IMR-90 (cell line): ENCODE measurements at regions of chr15 and their contacts with region 1.

Region 1: DNA sequence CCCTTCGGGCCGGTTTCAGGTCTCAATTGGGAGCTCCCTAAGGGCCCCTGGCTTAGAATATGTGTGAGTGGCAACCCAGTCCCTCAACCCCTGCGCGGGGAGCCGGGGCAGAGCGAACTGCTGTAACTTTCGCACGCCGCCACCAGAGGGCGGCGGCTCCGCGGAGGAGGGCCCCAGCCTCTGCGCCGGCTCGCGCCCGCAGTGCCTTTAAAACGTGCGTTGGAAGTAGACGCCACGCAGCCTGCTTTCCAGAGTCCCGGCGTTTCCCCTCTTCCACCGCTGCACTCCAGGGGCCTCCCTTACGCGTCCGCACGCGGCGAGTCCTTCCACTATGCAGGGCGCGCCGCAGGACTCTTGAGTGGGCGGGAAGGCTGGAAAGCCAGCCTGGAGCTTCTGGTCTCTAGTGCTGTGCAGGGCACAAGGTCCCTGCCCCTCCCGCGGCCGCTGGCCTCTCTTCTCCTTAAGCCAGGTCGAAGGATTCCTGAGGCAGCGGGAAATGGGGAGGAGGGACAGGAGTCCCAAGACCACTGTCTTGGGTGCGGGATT is 23.7 kb upstream of the RNU6-1 start:
- DNase-seq: peak; percentile 71
- ATAC-seq: peak; percentile 97
- H3K4me3 ChIP-seq: peak overlapping the region; percentile 47
- H3K27ac ChIP-seq: no peak overlapping the region; the same call in 1 of the 2 replicates
- H3K4me1 ChIP-seq: peaks cover 4% of the 10 kb centered on the region; the same call in 1 of the 2 replicates
- H3K27me3 ChIP-seq: peaks cover 8% of the 10 kb centered on the region; the same call in 1 of the 2 replicates
- CTCF ChIP-seq: peak; percentile 91
- POLR2A ChIP-seq: peak; percentile 36; the same call in 1 of the 2 replicates
- RAD21 ChIP-seq: peak; percentile 98

Region 2: GRCh38 chr15:68053701-68054627 is 190.4 kb after region 1 on chr15 and contains the start of gene PIAS1:
- CTCF ChIA-PET with region 1: no interaction called
- POLR2A ChIA-PET with region 1: no interaction called
- dilution Hi-C with region 1: no loop called
- in situ Hi-C with region 1: no loop called
- intact Hi-C with region 1: loop called (anchors 1 kb)
- DNase-seq: peak; percentile 83
- ATAC-seq: peak; percentile 98
- H3K4me3 ChIP-seq: peak within 1 kb of the TSS; percentile 88
- H3K27ac ChIP-seq: peak within 1 kb of the TSS; percentile 57
- H3K4me1 ChIP-seq: no peaks in the 10 kb centered on the region; the same call in 1 of the 2 replicates
- H3K27me3 ChIP-seq: no peaks in the 10 kb centered on the region; the same call in 1 of the 2 replicates
- CTCF ChIP-seq: no peak
- POLR2A ChIP-seq: peak; percentile 74
- RAD21 ChIP-seq: no peak
- total RNA-seq, gene PIAS1: 41.1 and 63.6 TPM in 2 replicates

Region 3: DNA sequence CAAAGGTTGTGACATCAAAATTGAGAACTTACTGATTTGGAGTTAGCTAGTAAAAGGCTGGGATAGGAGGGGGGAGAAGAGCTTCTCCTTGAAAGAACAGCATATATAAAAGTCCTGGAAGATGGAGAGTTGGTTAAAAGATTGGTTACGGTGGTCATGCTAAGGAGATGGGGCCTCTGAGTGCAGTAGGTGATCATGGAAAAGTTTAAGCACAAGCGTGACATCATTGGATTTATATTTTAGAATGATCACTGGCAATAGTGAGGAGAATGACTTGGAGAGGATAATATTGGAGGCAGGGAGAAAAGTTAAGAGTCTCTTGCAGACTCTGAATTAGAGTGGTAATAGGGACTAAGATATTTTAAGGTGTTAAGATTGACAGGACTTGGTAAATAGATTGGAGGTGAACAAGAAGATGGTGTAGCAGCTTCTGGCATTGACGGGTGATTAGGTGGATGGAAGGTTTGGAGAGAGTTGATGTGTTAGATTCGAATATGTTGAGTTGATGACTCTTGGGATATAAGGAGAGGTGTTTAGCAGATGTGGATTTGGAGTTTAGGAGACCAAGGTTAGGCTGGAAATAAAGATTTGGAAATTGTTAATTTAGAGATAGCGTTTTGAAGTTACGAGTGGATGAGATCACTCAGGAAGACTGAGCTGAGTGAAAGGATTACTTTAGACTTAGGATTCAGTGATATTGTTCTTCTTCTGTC is 210.2 kb after region 1 on chr15:
- CTCF ChIA-PET with region 1: no interaction called
- POLR2A ChIA-PET with region 1: interaction called, 16 read pairs
- dilution Hi-C with region 1: no loop called
- in situ Hi-C with region 1: no loop called
- intact Hi-C with region 1: no loop called
- DNase-seq: no peak
- ATAC-seq: no peak
- H3K4me3 ChIP-seq: no peak overlapping the region
- H3K27ac ChIP-seq: no peak overlapping the region
- H3K4me1 ChIP-seq: no peaks in the 10 kb centered on the region
- H3K27me3 ChIP-seq: no peaks in the 10 kb centered on the region
- CTCF ChIP-seq: no peak
- POLR2A ChIP-seq: no peak
- RAD21 ChIP-seq: no peak

Region 4: DNA sequence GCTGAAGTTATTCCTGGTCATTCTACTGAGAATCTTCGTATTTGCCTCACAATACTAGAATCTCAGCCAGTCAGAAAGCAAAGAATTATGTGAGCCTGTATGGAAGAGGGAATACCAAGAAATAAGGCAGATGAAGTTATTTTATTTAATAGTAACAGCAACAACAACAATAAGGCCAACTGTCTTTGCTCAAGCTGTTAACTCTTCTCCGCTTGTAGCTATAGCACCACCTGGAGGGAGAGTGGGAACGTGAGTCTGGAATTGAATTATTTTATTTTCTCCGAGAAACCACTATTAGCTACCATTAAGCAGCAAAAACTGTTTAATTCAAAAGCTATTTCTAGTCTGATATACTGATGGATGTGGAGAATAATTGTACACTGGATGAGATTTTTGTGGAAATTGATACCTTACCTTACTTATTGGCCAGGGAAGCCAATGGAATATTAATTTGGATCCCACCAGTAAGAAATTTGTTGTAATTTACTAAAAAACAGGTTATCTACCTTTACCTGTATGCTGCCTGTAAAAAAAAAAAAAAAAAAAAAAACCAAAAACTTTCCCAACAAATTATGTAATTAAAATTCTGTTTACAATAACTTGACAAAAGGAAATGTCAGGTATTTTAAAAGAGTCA is 291.5 kb after region 1 on chr15:
- CTCF ChIA-PET with region 1: interaction called, 4 read pairs
- POLR2A ChIA-PET with region 1: no interaction called
- dilution Hi-C with region 1: no loop called
- in situ Hi-C with region 1: loop called (anchors 10 kb)
- intact Hi-C with region 1: loop called (anchors 1 kb)
- DNase-seq: peak; percentile 70
- ATAC-seq: peak; percentile 54
- H3K4me3 ChIP-seq: no peak overlapping the region
- H3K27ac ChIP-seq: no peak overlapping the region
- H3K4me1 ChIP-seq: no peaks in the 10 kb centered on the region
- H3K27me3 ChIP-seq: no peaks in the 10 kb centered on the region
- CTCF ChIP-seq: peak; percentile 80
- POLR2A ChIP-seq: no peak
- RAD21 ChIP-seq: peak; percentile 91

Region 5: DNA sequence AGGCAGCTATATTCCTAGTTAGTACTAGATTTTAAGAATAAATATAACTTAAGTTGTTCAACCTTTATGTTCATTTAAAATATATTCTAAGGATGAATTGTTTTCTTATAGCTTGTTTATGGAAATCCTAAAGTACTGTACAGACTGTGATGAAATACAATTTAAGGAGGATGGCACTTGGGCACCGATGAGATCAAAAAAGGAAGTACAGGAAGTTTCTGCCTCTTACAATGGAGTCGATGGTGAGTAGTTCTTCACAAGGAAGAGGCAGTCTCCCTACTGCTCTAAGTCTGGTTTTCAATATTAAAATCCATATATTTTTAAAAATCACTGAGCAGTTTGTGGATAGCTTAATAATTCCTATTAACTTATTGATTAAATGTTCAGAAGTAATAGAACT is 312.0 kb after region 1 on chr15:
- CTCF ChIA-PET with region 1: no interaction called
- POLR2A ChIA-PET with region 1: no interaction called
- dilution Hi-C with region 1: no loop called
- in situ Hi-C with region 1: no loop called
- intact Hi-C with region 1: no loop called
- DNase-seq: no peak
- ATAC-seq: no peak
- H3K4me3 ChIP-seq: no peak overlapping the region
- H3K27ac ChIP-seq: no peak overlapping the region
- H3K4me1 ChIP-seq: peaks cover 6% of the 10 kb centered on the region
- H3K27me3 ChIP-seq: no peaks in the 10 kb centered on the region
- CTCF ChIP-seq: no peak
- POLR2A ChIP-seq: no peak
- RAD21 ChIP-seq: no peak

Region 6: DNA sequence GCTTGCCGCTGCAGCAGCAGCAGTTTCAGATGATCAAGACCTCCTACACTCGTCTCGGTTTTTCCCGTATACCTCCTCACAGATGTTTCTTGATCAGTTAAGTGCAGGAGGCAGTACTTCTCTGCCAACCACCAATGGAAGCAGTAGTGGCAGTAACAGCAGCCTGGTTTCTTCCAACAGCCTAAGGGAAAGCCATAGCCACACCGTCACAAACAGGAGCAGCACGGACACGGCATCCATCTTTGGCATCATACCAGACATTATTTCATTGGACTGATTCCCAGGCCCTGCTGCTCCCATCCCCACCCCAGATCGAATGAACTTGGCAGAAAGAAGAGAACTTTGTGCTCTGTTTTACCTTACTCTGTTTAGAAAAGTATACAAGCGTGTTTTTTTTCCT is 324.0 kb after region 1 on chr15:
- CTCF ChIA-PET with region 1: no interaction called
- POLR2A ChIA-PET with region 1: no interaction called
- dilution Hi-C with region 1: no loop called
- in situ Hi-C with region 1: no loop called
- intact Hi-C with region 1: loop called (anchors 1 kb)
- DNase-seq: peak; percentile 88
- ATAC-seq: peak; percentile 80
- H3K4me3 ChIP-seq: no peak overlapping the region
- H3K27ac ChIP-seq: peak overlapping the region; percentile 68; the same call in 1 of the 2 replicates
- H3K4me1 ChIP-seq: peaks cover 11% of the 10 kb centered on the region
- H3K27me3 ChIP-seq: no peaks in the 10 kb centered on the region
- CTCF ChIP-seq: no peak
- POLR2A ChIP-seq: no peak
- RAD21 ChIP-seq: no peak

Region 7: GRCh38 chr15:68210821-68211655 is 347.5 kb after region 1 on chr15:
- CTCF ChIA-PET with region 1: no interaction called
- POLR2A ChIA-PET with region 1: no interaction called
- dilution Hi-C with region 1: no loop called
- in situ Hi-C with region 1: no loop called
- intact Hi-C with region 1: loop called (anchors 2 kb)
- DNase-seq: peak; percentile 42
- ATAC-seq: peak; percentile 98
- H3K4me3 ChIP-seq: no peak overlapping the region
- H3K27ac ChIP-seq: peak overlapping the region; percentile 4; the same call in 1 of the 2 replicates
- H3K4me1 ChIP-seq: peaks cover 3% of the 10 kb centered on the region; the same call in 1 of the 2 replicates
- H3K27me3 ChIP-seq: no peaks in the 10 kb centered on the region
- CTCF ChIP-seq: peak; percentile 89
- POLR2A ChIP-seq: no peak
- RAD21 ChIP-seq: peak; percentile 75